Naive thymus-derived CD8-positive, alpha-beta T cell (primary cell): ENCODE measurements at regions of chr6 and their contacts with region 1.

Region 1: DNA sequence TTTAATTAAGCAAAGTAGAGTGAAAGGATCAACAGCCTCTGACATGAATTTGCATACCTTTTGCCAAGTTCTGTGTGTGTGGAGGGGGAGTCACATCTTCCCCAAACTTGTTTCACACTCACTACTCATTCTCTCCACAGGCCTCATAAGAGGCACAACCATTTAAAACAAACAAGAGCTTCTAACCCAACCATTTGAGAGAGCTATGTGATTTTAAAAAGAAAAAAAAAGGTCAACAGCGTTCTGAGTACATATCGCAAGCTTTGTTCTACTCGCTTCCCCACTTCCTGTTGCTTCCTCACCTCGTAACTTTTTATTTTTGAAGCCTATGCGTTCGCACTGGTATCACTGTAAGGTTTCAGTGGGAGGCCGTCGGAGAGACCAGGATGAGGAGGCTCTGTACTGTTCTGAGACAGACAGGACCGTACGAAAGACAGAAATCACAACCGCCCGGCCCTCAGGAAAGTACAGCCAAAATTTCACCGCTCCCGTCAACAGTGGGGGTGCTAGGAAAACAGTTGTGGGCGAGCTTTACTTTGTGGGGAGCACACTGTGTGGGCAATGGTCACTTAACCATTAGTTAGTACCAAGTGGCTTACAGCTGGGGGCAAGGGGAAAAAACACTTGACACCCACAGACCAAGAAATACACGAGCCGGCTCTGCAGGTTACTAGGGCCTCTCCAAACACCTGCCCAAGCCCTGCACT is 61.3 kb downstream of the TRERF1 start:
- DNase-seq: peak in 8 of 10 donors; percentile 34 to 88 (median 74)
- ATAC-seq: peak; percentile 77 to 81
- H3K4me3 Mint-ChIP-seq: peak overlapping the region; percentile 64 to 91 (median 78)
- H3K27ac Mint-ChIP-seq: peak overlapping the region; percentile 95 to 100 (median 99)
- H3K4me1 Mint-ChIP-seq: peaks cover 58 to 99% (median 99%) of the 10 kb centered on the region in 4 donors
- H3K27me3 Mint-ChIP-seq: no peaks in the 10 kb centered on the region

Region 2: DNA sequence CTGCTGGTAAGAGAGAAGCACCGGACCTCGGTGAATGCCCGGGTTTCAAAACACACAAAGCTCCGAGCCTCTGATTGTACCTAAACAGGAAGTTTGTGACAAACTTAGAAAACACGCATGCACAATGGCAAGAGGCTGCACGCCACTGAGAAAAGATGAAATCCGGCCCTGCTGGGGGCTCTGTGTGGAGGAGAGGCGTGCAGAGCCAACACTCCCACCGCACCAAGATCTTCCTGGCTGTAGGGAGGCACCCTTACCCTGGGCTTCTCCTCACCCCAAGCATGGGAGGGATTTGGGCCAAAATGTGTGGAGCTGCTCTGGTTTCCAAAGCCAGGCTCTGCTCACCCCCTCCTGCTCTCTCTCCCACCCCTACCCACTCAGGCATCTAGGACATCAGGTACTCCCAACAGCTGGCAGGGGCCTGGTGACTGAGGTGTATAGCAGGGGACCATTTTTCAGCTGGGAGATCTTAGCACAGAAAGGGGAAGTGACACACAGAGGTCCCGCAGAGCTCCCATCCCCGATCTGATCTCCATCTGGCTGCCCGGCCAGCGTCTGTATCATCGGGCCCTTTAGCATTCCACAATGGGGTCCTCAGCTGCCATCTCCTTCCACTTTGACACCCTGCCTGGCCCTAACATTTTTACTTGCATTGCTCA is 22.9 kb before region 1 on chr6:
- POLR2A ChIA-PET with region 1: interaction called, 112 read pairs
- DNase-seq: peak in 1 of 10 donors; percentile 39
- ATAC-seq: peak; percentile 60 to 73
- H3K4me3 Mint-ChIP-seq: peak overlapping the region; percentile 71 to 90 (median 78)
- H3K27ac Mint-ChIP-seq: peak overlapping the region; percentile 88 to 96 (median 93)
- H3K4me1 Mint-ChIP-seq: peaks cover 53 to 90% (median 84%) of the 10 kb centered on the region in 4 donors
- H3K27me3 Mint-ChIP-seq: no peaks in the 10 kb centered on the region

Region 3: DNA sequence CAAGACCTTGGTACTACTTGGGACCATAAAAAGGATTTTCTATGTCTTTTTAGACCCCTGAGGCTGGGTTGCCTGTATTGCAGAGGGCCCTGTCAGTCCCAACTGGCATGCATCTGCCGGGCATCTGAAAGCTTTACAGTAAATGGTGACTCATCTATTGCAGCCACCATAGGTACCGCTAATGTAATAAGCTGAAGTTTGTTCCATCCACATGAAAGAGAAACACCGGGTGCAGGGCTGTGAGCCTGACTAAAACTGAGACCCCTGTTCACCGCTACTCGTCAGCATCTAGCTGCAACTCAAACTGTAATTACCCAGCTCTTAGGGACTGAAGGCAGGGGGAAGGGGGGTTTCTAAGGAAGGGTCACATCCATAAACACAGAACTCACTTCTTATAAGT is 11.8 kb after region 1 on chr6:
- POLR2A ChIA-PET with region 1: interaction called, 81 read pairs
- DNase-seq: no peak
- ATAC-seq: peak; percentile 49 to 72
- H3K4me3 Mint-ChIP-seq: peak overlapping the region in 7 of 10 donors; percentile 7 to 78 (median 26)
- H3K27ac Mint-ChIP-seq: peak overlapping the region in 9 of 10 donors; percentile 29 to 93 (median 75)
- H3K4me1 Mint-ChIP-seq: peaks cover 46 to 91% (median 87%) of the 10 kb centered on the region in 4 donors
- H3K27me3 Mint-ChIP-seq: no peaks in the 10 kb centered on the region

Region 4: GRCh38 chr6:42428326-42429041 is 38.1 kb after region 1 on chr6:
- POLR2A ChIA-PET with region 1: interaction called, 14 read pairs
- DNase-seq: no peak
- ATAC-seq: peak; percentile 61 to 64
- H3K4me3 Mint-ChIP-seq: peak overlapping the region in 8 of 10 donors; percentile 41 to 81 (median 60)
- H3K27ac Mint-ChIP-seq: peak overlapping the region; percentile 56 to 96 (median 83)
- H3K4me1 Mint-ChIP-seq: peaks cover 35 to 64% (median 60%) of the 10 kb centered on the region in 4 donors
- H3K27me3 Mint-ChIP-seq: no peaks in the 10 kb centered on the region